Activated CD8-positive, alpha-beta T cell treated with anti-CD3 and anti-CD28 coated beads for 36 hours (primary cell): ENCODE measurements at regions of chr2 and their contacts with region 1.

Region 1: GRCh38 chr2:44087036-44087713 is 81.5 kb upstream of the PPM1B start:
- DNase-seq: peak; percentile 88
- ATAC-seq: peak; percentile 90
- H3K4me3 Mint-ChIP-seq: peak overlapping the region; percentile 63
- H3K27ac Mint-ChIP-seq: peak overlapping the region; percentile 87
- H3K4me1 Mint-ChIP-seq: peaks cover 24% of the 10 kb centered on the region
- H3K27me3 Mint-ChIP-seq: no peaks in the 10 kb centered on the region
- CTCF ChIP-seq: peak; percentile 89

Region 2: GRCh38 chr2:44044281-44044720 is 42.9 kb before region 1 on chr2:
- CTCF ChIA-PET with region 1: interaction called, 14 read pairs
- POLR2A ChIA-PET with region 1: interaction called, 3 read pairs
- intact Hi-C with region 1: no loop called
- DNase-seq: peak; percentile 91
- ATAC-seq: peak; percentile 100
- H3K4me3 Mint-ChIP-seq: no peak overlapping the region
- H3K27ac Mint-ChIP-seq: no peak overlapping the region
- H3K4me1 Mint-ChIP-seq: no peaks in the 10 kb centered on the region
- H3K27me3 Mint-ChIP-seq: peaks cover 2% of the 10 kb centered on the region
- CTCF ChIP-seq: peak; percentile 84

Region 3: GRCh38 chr2:44120428-44120827 is 33.3 kb after region 1 on chr2:
- CTCF ChIA-PET with region 1: interaction called, 6 read pairs
- POLR2A ChIA-PET with region 1: interaction called, 3 read pairs
- intact Hi-C with region 1: loop called (anchors 2 kb)
- DNase-seq: peak; percentile 40
- ATAC-seq: peak; percentile 81
- H3K4me3 Mint-ChIP-seq: no peak overlapping the region
- H3K27ac Mint-ChIP-seq: peak overlapping the region; percentile 20
- H3K4me1 Mint-ChIP-seq: peaks cover 28% of the 10 kb centered on the region
- H3K27me3 Mint-ChIP-seq: peaks cover 2% of the 10 kb centered on the region
- CTCF ChIP-seq: no peak

Region 4: DNA sequence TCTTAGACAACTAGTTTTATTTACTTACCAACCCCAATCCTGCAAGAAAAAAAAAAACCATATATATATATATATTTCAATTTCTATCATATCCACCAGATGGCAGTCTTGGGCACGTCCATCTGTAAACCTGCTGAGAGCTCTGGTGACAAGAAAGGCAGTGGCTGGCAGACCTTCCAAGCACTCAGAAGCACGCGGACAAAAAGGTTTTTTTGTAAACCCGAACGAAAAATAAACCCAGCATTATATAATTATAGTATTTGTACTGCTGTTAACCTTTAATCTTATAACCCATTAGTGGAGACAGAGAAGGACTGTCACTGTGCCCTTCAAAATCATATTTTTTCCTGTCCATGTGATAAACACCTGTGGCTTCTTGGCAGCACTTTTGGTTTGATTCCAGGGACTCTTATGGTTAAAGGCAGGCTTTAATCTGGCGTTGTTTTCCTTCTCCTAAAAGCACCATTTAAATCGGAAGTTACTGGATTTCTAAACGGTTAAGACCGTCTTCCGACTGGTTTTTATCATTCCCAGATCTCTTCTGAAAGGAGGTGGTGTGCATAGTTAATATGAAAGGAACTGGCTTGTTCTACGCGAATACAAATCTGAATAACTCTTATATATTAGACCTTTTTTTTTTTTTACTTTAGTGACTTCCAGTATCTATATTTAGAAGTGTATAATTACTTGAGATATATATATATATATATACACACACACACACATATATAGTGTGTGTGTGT is 157.1 kb after region 1 on chr2:
- CTCF ChIA-PET with region 1: interaction called, 19 read pairs
- POLR2A ChIA-PET with region 1: no interaction called
- intact Hi-C with region 1: loop called (anchors 5 kb)
- DNase-seq: peak; percentile 67
- ATAC-seq: peak; percentile 92
- H3K4me3 Mint-ChIP-seq: peak overlapping the region; percentile 73
- H3K27ac Mint-ChIP-seq: peak overlapping the region; percentile 71
- H3K4me1 Mint-ChIP-seq: peaks cover 16% of the 10 kb centered on the region
- H3K27me3 Mint-ChIP-seq: no peaks in the 10 kb centered on the region
- CTCF ChIP-seq: peak; percentile 70

Region 5: GRCh38 chr2:44342854-44343253 is 255.7 kb after region 1 on chr2:
- CTCF ChIA-PET with region 1: interaction called, 14 read pairs
- POLR2A ChIA-PET with region 1: no interaction called
- intact Hi-C with region 1: no loop called
- DNase-seq: peak; percentile 36
- ATAC-seq: no peak
- H3K4me3 Mint-ChIP-seq: no peak overlapping the region
- H3K27ac Mint-ChIP-seq: no peak overlapping the region
- H3K4me1 Mint-ChIP-seq: no peaks in the 10 kb centered on the region
- H3K27me3 Mint-ChIP-seq: no peaks in the 10 kb centered on the region
- CTCF ChIP-seq: peak; percentile 49